ENCODE measurements at regions of chr19 and their contacts with region 1.

Region 1: GRCh38 chr19:49555600-49556411 is 24.6 kb downstream of the NOSIP start:
- DNase-seq: peak; percentile 59 to 94 (median 91)
- ATAC-seq: peak; percentile 89
- H3K4me3 ChIP-seq: peak overlapping the region; percentile 39
- H3K4me3 Mint-ChIP-seq: peak overlapping the region; percentile 62 to 90 (median 82)
- H3K27ac ChIP-seq: peak overlapping the region; percentile 88
- H3K27ac Mint-ChIP-seq: peak overlapping the region; percentile 93 to 100 (median 98)
- H3K4me1 ChIP-seq: peaks cover 53 to 71% of the 10 kb centered on the region in 2 donors
- H3K4me1 Mint-ChIP-seq: peaks cover 48 to 75% (median 68%) of the 10 kb centered on the region in 7 donors
- H3K27me3 ChIP-seq: no peaks in the 10 kb centered on the region
- H3K27me3 Mint-ChIP-seq: no peaks in the 10 kb centered on the region

Region 2: DNA sequence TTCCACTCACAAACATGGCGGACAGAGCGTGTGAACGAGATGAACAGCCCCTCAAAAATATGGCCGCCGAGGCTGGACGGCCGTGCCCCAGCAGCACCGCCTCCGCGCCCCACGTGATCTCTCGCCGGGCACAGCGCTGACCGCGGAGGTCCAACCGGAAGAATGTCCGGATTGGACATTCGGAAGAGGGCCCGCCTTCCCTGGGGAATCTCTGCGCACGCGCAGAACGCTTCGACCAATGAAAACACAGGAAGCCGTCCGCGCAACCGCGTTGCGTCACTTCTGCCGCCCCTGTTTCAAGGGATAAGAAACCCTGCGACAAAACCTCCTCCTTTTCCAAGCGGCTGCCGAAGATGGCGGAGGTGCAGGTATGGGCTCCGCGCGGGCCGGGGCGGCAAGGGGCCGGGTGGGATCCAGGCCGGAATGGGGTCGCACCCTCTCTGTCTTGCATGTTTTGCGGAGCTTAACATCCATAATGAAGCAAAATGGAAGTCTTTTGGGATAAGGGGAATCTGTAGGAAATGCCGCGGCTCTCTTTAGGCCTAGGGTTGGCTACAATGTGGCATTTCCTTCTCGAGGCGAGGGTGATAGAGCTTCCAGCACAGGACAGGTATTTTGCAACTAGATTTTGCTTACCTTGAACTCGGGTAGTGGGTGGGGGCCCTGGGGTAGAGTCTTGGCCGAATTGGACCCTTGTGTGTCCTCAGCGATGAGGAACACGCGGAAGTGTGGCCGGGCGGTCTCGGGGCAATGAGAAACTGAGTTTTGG is 68.3 kb before region 1 on chr19 and contains the start of gene RPL13A:
- CTCF ChIA-PET with region 1: interaction called, 3 read pairs
- POLR2A ChIA-PET with region 1: interaction called, 13 read pairs
- intact Hi-C with region 1: no loop called
- DNase-seq: peak; percentile 97 to 99 (median 99)
- ATAC-seq: peak; percentile 94
- H3K4me3 ChIP-seq: peak within 1 kb of the TSS; percentile 100
- H3K4me3 Mint-ChIP-seq: peak within 1 kb of the TSS; percentile 95 to 99 (median 98)
- H3K27ac ChIP-seq: peak within 1 kb of the TSS; percentile 92
- H3K27ac Mint-ChIP-seq: peak within 1 kb of the TSS; percentile 89 to 99 (median 96)
- H3K4me1 ChIP-seq: peaks cover 19 to 26% of the 10 kb centered on the region in 2 donors
- H3K4me1 Mint-ChIP-seq: peaks cover 27 to 52% (median 42%) of the 10 kb centered on the region in 7 donors
- H3K27me3 ChIP-seq: no peaks in the 10 kb centered on the region
- H3K27me3 Mint-ChIP-seq: peaks cover 0 to 9% (median 0%) of the 10 kb centered on the region in 5 donors
- total RNA-seq, gene RPL13A: 2,467 to 6,044 (median 5,762) TPM

Region 3: GRCh38 chr19:49497047-49497788 is 58.6 kb before region 1 on chr19:
- CTCF ChIA-PET with region 1: interaction called, 4 read pairs
- POLR2A ChIA-PET with region 1: interaction called, 29 read pairs
- intact Hi-C with region 1: no loop called
- DNase-seq: peak; percentile 55 to 85 (median 77)
- ATAC-seq: peak; percentile 20
- H3K4me3 ChIP-seq: peak overlapping the region; percentile 97
- H3K4me3 Mint-ChIP-seq: peak overlapping the region; percentile 96 to 100 (median 99)
- H3K27ac ChIP-seq: peak overlapping the region; percentile 99
- H3K27ac Mint-ChIP-seq: peak overlapping the region; percentile 91 to 100 (median 98)
- H3K4me1 ChIP-seq: peaks cover 21 to 40% of the 10 kb centered on the region in 2 donors
- H3K4me1 Mint-ChIP-seq: peaks cover 32 to 64% (median 50%) of the 10 kb centered on the region in 7 donors
- H3K27me3 ChIP-seq: no peaks in the 10 kb centered on the region
- H3K27me3 Mint-ChIP-seq: peaks cover 0 to 12% (median 0%) of the 10 kb centered on the region in 5 donors

Region 4: GRCh38 chr19:49502866-49503581 is 52.8 kb before region 1 on chr19:
- CTCF ChIA-PET with region 1: interaction called, 29 read pairs
- POLR2A ChIA-PET with region 1: interaction called, 29 read pairs
- intact Hi-C with region 1: no loop called
- DNase-seq: peak in 5 of 9 donors; percentile 68 to 81 (median 77)
- ATAC-seq: no peak
- H3K4me3 ChIP-seq: no peak overlapping the region
- H3K4me3 Mint-ChIP-seq: peak overlapping the region in 6 of 10 donors; percentile 7 to 96 (median 48)
- H3K27ac ChIP-seq: peak overlapping the region; percentile 99
- H3K27ac Mint-ChIP-seq: peak overlapping the region; percentile 91 to 100 (median 98)
- H3K4me1 ChIP-seq: peaks cover 36% of the 10 kb centered on the region in 2 donors
- H3K4me1 Mint-ChIP-seq: peaks cover 24 to 55% (median 40%) of the 10 kb centered on the region in 7 donors
- H3K27me3 ChIP-seq: no peaks in the 10 kb centered on the region
- H3K27me3 Mint-ChIP-seq: peaks cover 0 to 9% (median 0%) of the 10 kb centered on the region in 5 donors

Region 5: GRCh38 chr19:49533551-49534488 is 22.0 kb before region 1 on chr19:
- CTCF ChIA-PET with region 1: interaction called, 3 read pairs
- POLR2A ChIA-PET with region 1: interaction called, 17 read pairs
- intact Hi-C with region 1: loop called (anchors 1 to 2 kb)
- DNase-seq: peak; percentile 80 to 96 (median 89)
- ATAC-seq: peak; percentile 94
- H3K4me3 ChIP-seq: peak overlapping the region; percentile 58
- H3K4me3 Mint-ChIP-seq: peak overlapping the region; percentile 77 to 95 (median 91)
- H3K27ac ChIP-seq: peak overlapping the region; percentile 66
- H3K27ac Mint-ChIP-seq: peak overlapping the region; percentile 41 to 95 (median 72)
- H3K4me1 ChIP-seq: peaks cover 12 to 21% of the 10 kb centered on the region in 2 donors
- H3K4me1 Mint-ChIP-seq: peaks cover 19 to 32% (median 24%) of the 10 kb centered on the region in 7 donors
- H3K27me3 ChIP-seq: no peaks in the 10 kb centered on the region
- H3K27me3 Mint-ChIP-seq: peaks cover 0 to 4% (median 0%) of the 10 kb centered on the region in 5 donors